K562 (cell line): ENCODE measurements at regions of chr6 and their contacts with region 1.

Region 1: GRCh38 chr6:159608961-159609651 is 83.9 kb downstream of the SOD2 start:
- DNase-seq: peak; percentile 45 to 64 (median 57)
- ATAC-seq: peak; percentile 98
- H3K4me3 ChIP-seq: no peak overlapping the region
- H3K27ac ChIP-seq: no peak overlapping the region
- H3K4me1 ChIP-seq: no peaks in the 10 kb centered on the region
- H3K27me3 ChIP-seq: peaks cover 0 to 31% of the 10 kb centered on the region in 2 experiments; a peak in 3 of 5 replicates
- CTCF ChIP-seq: peak; percentile 82 to 86 (median 84)
- EP300 ChIP-seq: no peak
- POLR2A ChIP-seq: no peak
- RAD21 ChIP-seq: peak; percentile 51 to 82

Region 2: DNA sequence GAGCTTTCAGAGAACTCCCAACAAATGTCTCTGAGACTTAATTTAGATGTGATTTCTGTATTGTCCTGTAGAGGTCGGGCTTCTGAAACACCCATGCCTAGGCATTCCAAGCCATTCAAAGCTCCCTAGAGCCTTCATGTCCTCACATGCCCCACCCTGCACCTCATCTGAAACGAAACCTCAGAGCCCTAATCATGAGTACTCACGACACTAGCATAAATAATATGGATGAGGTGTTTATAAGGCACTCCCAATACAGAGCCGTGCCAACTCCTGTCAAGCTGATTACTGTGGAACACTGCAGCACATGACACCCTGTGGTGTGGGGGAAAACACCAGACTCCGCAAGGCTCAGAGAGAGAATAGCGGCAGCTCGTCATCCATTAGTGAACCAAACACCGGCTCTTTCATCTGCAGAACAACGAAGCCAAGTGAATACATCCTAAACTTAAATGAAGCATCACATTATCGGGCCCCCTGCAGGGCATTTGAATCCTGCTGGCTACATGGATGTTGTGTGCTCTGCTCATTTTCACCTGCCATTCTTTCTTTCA is 356.1 kb before region 1 on chr6:
- CTCF ChIA-PET with region 1: no interaction called
- POLR2A ChIA-PET with region 1: no interaction called
- in situ Hi-C with region 1: no loop called
- intact Hi-C with region 1: loop called (anchors 5 kb)
- DNase-seq: peak; percentile 53 to 69 (median 60)
- ATAC-seq: peak; percentile 93
- H3K4me3 ChIP-seq: no peak overlapping the region
- H3K27ac ChIP-seq: no peak overlapping the region
- H3K4me1 ChIP-seq: no peaks in the 10 kb centered on the region
- H3K27me3 ChIP-seq: peaks cover 0 to 9% of the 10 kb centered on the region in 2 experiments; a peak in 3 of 5 replicates
- CTCF ChIP-seq: peak; percentile 53 to 70 (median 66)
- EP300 ChIP-seq: no peak
- POLR2A ChIP-seq: no peak
- RAD21 ChIP-seq: peak in 1 of 2 experiments; percentile 45; a peak in 3 of 4 replicates